ENCODE measurements at regions of chr2 and their contacts with region 1.

Region 1: GRCh38 chr2:220687231-220687843 is 884.8 kb downstream of the EPHA4 start:
- DNase-seq: peak; percentile 84
- ATAC-seq: peak; percentile 79
- H3K4me3 ChIP-seq: no peak overlapping the region
- H3K27ac ChIP-seq: no peak overlapping the region
- H3K4me1 ChIP-seq: peaks cover 5% of the 10 kb centered on the region; the same call in 1 of the 2 replicates
- H3K27me3 ChIP-seq: no peaks in the 10 kb centered on the region
- CTCF ChIP-seq: peak; percentile 95

Region 2: GRCh38 chr2:220053919-220054318 is 633.4 kb before region 1 on chr2:
- CTCF ChIA-PET with region 1: no interaction called
- POLR2A ChIA-PET with region 1: no interaction called
- intact Hi-C with region 1: loop called (anchors 5 kb)
- DNase-seq: peak; percentile 70
- ATAC-seq: no peak; the same call in 1 of the 2 replicates
- H3K4me3 ChIP-seq: no peak overlapping the region
- H3K27ac ChIP-seq: no peak overlapping the region
- H3K4me1 ChIP-seq: no peaks in the 10 kb centered on the region
- H3K27me3 ChIP-seq: no peaks in the 10 kb centered on the region
- CTCF ChIP-seq: peak; percentile 79

Region 3: DNA sequence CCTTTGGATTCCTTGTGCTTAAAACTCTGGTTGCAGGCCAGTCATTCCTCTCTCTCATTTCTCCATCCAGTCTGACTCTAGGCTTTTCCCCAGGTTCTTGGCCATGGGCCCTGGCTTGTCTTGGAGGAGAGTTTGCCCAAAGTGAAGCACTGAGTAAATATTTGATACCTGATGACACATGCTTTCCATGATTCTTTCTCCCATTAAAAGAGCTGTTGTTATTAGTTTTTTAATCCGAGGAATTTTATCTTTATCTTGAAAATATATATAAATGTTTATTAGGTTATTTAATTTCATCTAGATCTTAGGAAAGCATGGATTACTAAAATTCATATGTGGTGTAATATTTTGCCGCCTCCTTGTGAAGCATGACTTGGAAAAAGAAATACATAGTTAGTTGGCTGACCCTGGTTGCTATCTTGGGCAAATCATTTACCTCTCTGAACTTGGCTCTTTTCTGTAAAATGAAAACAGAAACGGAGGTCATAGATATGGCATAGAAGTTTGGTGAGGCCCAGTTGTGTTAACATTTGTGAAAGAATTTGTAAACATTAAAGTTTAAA is 409.8 kb before region 1 on chr2:
- CTCF ChIA-PET with region 1: no interaction called
- POLR2A ChIA-PET with region 1: no interaction called
- intact Hi-C with region 1: loop called (anchors 10 kb)
- DNase-seq: peak; percentile 97
- ATAC-seq: peak; percentile 67
- H3K4me3 ChIP-seq: no peak overlapping the region
- H3K27ac ChIP-seq: peak overlapping the region; percentile 96
- H3K4me1 ChIP-seq: peaks cover 94% of the 10 kb centered on the region
- H3K27me3 ChIP-seq: no peaks in the 10 kb centered on the region
- CTCF ChIP-seq: no peak

Region 4: GRCh38 chr2:220417503-220417902 is 269.8 kb before region 1 on chr2:
- CTCF ChIA-PET with region 1: no interaction called
- POLR2A ChIA-PET with region 1: no interaction called
- intact Hi-C with region 1: no loop called
- DNase-seq: no peak
- ATAC-seq: no peak
- H3K4me3 ChIP-seq: no peak overlapping the region
- H3K27ac ChIP-seq: no peak overlapping the region
- H3K4me1 ChIP-seq: no peaks in the 10 kb centered on the region
- H3K27me3 ChIP-seq: no peaks in the 10 kb centered on the region
- CTCF ChIP-seq: no peak

Region 5: DNA sequence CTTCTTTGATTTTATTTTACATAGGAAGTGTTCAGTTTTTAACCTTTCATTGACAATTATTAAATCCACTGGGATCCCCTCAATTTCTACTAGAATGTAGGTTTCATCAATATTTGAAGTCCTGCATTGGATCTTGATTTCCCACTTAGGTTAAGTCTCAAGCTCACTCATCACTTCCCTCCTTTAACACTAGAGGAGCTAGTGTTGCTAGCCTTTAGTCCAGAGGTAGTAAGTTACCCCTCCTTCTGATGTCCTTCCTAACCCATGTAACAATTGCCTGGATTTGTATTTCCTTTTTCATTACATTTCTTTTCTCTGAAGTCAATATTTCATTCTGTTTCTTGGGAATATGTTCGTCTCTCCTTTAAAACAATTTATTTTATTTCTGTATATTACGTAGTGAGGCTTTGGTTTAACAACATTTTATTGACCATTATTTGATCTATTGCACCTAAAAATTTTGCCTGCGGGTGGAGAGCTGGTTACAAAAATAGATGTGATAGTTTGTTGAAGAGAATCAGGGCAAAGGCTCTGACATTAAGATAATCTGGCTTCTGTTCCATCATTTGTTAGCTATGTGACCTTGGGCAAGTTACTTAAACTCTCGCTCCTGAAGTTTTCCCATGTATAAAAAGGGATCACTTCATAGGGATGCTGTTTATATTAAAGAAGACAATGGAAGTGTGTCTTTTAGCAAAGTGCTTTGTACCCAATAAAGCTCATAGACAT is 226.9 kb before region 1 on chr2:
- CTCF ChIA-PET with region 1: no interaction called
- POLR2A ChIA-PET with region 1: no interaction called
- intact Hi-C with region 1: loop called (anchors 10 kb)
- DNase-seq: peak; percentile 34
- ATAC-seq: peak; percentile 37; the same call in 1 of the 2 replicates
- H3K4me3 ChIP-seq: no peak overlapping the region
- H3K27ac ChIP-seq: no peak overlapping the region
- H3K4me1 ChIP-seq: no peaks in the 10 kb centered on the region
- H3K27me3 ChIP-seq: no peaks in the 10 kb centered on the region
- CTCF ChIP-seq: peak; percentile 59

Region 6: DNA sequence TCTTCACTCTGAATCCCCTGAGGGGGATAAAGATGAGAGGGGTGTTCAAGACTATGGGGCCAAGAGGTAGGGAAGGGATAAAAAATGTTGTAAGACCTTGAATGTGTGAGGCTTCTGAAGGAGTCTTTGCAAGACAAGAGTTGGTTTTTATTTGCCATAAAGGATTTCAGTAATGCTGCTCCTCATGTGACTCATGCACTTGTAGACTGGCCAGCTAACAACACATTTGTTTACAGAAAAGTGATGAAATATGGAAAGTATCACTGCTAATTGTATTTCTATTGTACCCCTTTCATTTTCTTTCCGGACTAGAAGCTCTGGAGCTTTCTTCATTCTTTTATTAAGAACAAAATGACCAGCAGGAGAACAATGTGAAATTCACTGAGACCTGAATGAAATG is 102.6 kb after region 1 on chr2:
- CTCF ChIA-PET with region 1: no interaction called
- POLR2A ChIA-PET with region 1: no interaction called
- intact Hi-C with region 1: no loop called
- DNase-seq: peak; percentile 79
- ATAC-seq: peak; percentile 84
- H3K4me3 ChIP-seq: no peak overlapping the region
- H3K27ac ChIP-seq: no peak overlapping the region
- H3K4me1 ChIP-seq: peaks cover 13% of the 10 kb centered on the region; the same call in 1 of the 2 replicates
- H3K27me3 ChIP-seq: no peaks in the 10 kb centered on the region
- CTCF ChIP-seq: no peak

Region 7: DNA sequence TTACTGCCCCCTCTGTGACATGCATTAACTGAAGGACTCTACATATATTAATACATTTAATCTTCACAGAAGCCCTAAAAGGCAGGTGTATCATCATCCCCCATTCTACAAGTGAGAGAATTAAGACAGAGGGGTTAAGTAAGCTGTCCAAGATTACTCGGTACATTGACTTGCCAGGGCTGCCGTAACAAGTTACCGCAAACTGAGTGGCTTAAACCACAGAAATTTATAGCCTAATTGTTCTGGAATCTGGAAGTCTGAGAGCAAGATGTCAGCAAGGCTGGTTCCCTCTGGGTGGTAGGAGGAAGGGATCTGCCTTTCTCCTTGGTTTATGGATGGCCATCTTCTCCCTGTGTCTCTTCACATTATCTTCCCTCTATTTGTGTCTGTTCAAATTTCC is 279.3 kb after region 1 on chr2:
- CTCF ChIA-PET with region 1: no interaction called
- POLR2A ChIA-PET with region 1: no interaction called
- intact Hi-C with region 1: loop called (anchors 1 kb)
- DNase-seq: peak; percentile 78
- ATAC-seq: peak; percentile 69
- H3K4me3 ChIP-seq: no peak overlapping the region
- H3K27ac ChIP-seq: no peak overlapping the region
- H3K4me1 ChIP-seq: peaks cover 17% of the 10 kb centered on the region
- H3K27me3 ChIP-seq: no peaks in the 10 kb centered on the region
- CTCF ChIP-seq: no peak

Region 8: GRCh38 chr2:221104361-221104811 is 417.0 kb after region 1 on chr2:
- CTCF ChIA-PET with region 1: no interaction called
- POLR2A ChIA-PET with region 1: no interaction called
- intact Hi-C with region 1: loop called (anchors 2 kb)
- DNase-seq: no peak
- ATAC-seq: no peak
- H3K4me3 ChIP-seq: no peak overlapping the region
- H3K27ac ChIP-seq: no peak overlapping the region
- H3K4me1 ChIP-seq: no peaks in the 10 kb centered on the region
- H3K27me3 ChIP-seq: peaks cover 9% of the 10 kb centered on the region; the same call in 1 of the 2 replicates
- CTCF ChIP-seq: no peak

Measured in PC-3 (cell line).